Activated CD4-positive, alpha-beta memory T cell treated with anti-CD3 and anti-CD28 coated beads, Interleukin-2, amount 10 ng/mL, durations not matched to agents 7 days and 5 days (primary cell): ENCODE measurements at regions of chr11 and their contacts with region 1.

Region 1: DNA sequence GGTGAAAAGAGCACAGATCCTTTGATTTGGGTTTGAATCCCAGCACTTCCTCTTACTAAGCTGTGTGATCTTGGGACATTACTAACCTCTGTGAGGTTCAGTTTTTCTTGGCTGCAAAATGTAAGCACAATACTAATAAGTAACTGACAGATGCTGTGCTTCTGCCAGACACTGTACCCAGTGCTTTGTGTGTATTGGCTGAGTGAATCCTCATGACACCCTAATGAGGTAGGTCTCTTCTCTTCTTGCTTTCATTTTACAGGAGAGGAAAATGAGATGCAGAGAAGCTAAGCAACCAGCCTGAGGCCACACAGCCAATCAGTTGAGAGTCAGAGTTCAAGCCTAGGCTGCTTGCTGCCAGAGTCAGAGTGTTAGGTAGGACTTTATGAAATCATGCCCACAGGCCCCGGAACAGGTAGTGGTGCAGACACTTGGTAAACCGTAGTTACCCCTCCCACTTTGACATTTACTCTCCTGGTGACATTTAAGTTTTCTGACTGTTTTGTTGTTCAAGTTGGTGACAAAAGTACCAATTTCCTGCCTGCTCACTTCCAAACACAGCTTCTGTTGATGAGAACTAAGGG is 21.2 kb downstream of the PTPRJ start:
- DNase-seq: peak; percentile 93
- H3K4me3 Mint-ChIP-seq: peak overlapping the region; percentile 43
- H3K27ac Mint-ChIP-seq: peak overlapping the region; percentile 100
- H3K4me1 Mint-ChIP-seq: peaks cover 90% of the 10 kb centered on the region
- H3K27me3 Mint-ChIP-seq: no peaks in the 10 kb centered on the region

Region 2: GRCh38 chr11:47858169-47858543 is 143.4 kb before region 1 on chr11:
- CTCF ChIA-PET with region 1: no interaction called
- POLR2A ChIA-PET with region 1: no interaction called
- DNase-seq: no peak
- H3K4me3 Mint-ChIP-seq: no peak overlapping the region
- H3K27ac Mint-ChIP-seq: no peak overlapping the region
- H3K4me1 Mint-ChIP-seq: peaks cover 28% of the 10 kb centered on the region
- H3K27me3 Mint-ChIP-seq: no peaks in the 10 kb centered on the region

Region 3: DNA sequence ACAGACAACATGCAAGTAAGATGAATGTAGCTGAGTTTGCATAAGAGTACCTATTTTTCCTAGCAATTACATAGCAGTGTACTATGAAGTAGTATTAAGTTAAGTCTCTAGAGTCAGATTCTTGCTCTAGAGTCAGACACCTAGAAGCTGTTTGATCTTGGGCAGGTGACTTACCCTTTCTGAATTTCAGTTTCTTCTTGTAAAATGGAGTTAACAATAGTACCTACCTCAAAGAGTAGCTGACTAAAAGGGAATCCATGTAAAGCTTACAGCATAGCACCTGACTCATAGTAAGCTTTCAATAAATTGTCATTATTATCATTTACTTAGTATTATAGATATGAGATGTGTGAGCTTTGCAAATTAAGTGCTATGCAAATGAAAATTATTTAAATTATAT is 69.0 kb before region 1 on chr11:
- CTCF ChIA-PET with region 1: interaction called, 23 read pairs
- POLR2A ChIA-PET with region 1: interaction called, 12 read pairs
- DNase-seq: no peak
- H3K4me3 Mint-ChIP-seq: no peak overlapping the region
- H3K27ac Mint-ChIP-seq: no peak overlapping the region
- H3K4me1 Mint-ChIP-seq: peaks cover 29% of the 10 kb centered on the region
- H3K27me3 Mint-ChIP-seq: no peaks in the 10 kb centered on the region

Region 4: GRCh38 chr11:47971501-47971900 is 30.0 kb before region 1 on chr11:
- CTCF ChIA-PET with region 1: no interaction called
- POLR2A ChIA-PET with region 1: no interaction called
- DNase-seq: no peak
- H3K4me3 Mint-ChIP-seq: no peak overlapping the region
- H3K27ac Mint-ChIP-seq: no peak overlapping the region
- H3K4me1 Mint-ChIP-seq: peaks cover 10% of the 10 kb centered on the region
- H3K27me3 Mint-ChIP-seq: no peaks in the 10 kb centered on the region

Region 5: GRCh38 chr11:47991266-47991830 is 10.2 kb before region 1 on chr11:
- CTCF ChIA-PET with region 1: interaction called, 5 read pairs
- POLR2A ChIA-PET with region 1: interaction called, 16 read pairs
- DNase-seq: no peak
- H3K4me3 Mint-ChIP-seq: peak overlapping the region; percentile 7
- H3K27ac Mint-ChIP-seq: peak overlapping the region; percentile 75
- H3K4me1 Mint-ChIP-seq: peaks cover 58% of the 10 kb centered on the region
- H3K27me3 Mint-ChIP-seq: no peaks in the 10 kb centered on the region

Region 6: GRCh38 chr11:48020092-48020755 is 18.7 kb after region 1 on chr11:
- CTCF ChIA-PET with region 1: interaction called, 24 read pairs
- POLR2A ChIA-PET with region 1: interaction called, 366 read pairs
- DNase-seq: peak; percentile 72
- H3K4me3 Mint-ChIP-seq: peak overlapping the region; percentile 62
- H3K27ac Mint-ChIP-seq: peak overlapping the region; percentile 92
- H3K4me1 Mint-ChIP-seq: peaks cover 85% of the 10 kb centered on the region
- H3K27me3 Mint-ChIP-seq: no peaks in the 10 kb centered on the region